ENCODE measurements at regions of chr19 and their contacts with region 1.

Region 1: GRCh38 chr19:15555759-15556633 is 47.7 kb downstream of the CYP4F22 start:
- DNase-seq: peak; percentile 95
- ATAC-seq: peak; percentile 83
- H3K4me3 ChIP-seq: peak overlapping the region; percentile 63
- H3K27ac ChIP-seq: no peak overlapping the region
- H3K4me1 ChIP-seq: 0 out of 2 replicates have a peak, but pooled peaks cover 8% of the 10 kb centered on the region
- H3K27me3 ChIP-seq: no peaks in the 10 kb centered on the region
- CTCF ChIP-seq: peak; percentile 74

Region 2: GRCh38 chr19:15101479-15102082 is 454.4 kb before region 1 on chr19:
- CTCF ChIA-PET with region 1: no interaction called
- POLR2A ChIA-PET with region 1: no interaction called
- intact Hi-C with region 1: loop called (anchors 2 kb)
- DNase-seq: peak; percentile 62
- ATAC-seq: peak; percentile 48; the same call in 1 of the 2 replicates
- H3K4me3 ChIP-seq: no peak overlapping the region
- H3K27ac ChIP-seq: no peak overlapping the region
- H3K4me1 ChIP-seq: no peaks in the 10 kb centered on the region
- H3K27me3 ChIP-seq: no peaks in the 10 kb centered on the region
- CTCF ChIP-seq: peak; percentile 80

Region 3: GRCh38 chr19:15177269-15178116 is 378.5 kb before region 1 on chr19:
- CTCF ChIA-PET with region 1: no interaction called
- POLR2A ChIA-PET with region 1: no interaction called
- intact Hi-C with region 1: loop called (anchors 1 kb)
- DNase-seq: peak; percentile 86
- ATAC-seq: peak; percentile 87
- H3K4me3 ChIP-seq: peak overlapping the region; percentile 49; the same call in 1 of the 2 replicates
- H3K27ac ChIP-seq: no peak overlapping the region
- H3K4me1 ChIP-seq: no peaks in the 10 kb centered on the region; the same call in 1 of the 2 replicates
- H3K27me3 ChIP-seq: no peaks in the 10 kb centered on the region
- CTCF ChIP-seq: peak; percentile 84

Region 4: GRCh38 chr19:15418588-15419412 is 137.2 kb before region 1 on chr19 and contains the start of gene AKAP8L:
- CTCF ChIA-PET with region 1: interaction called, 15 read pairs
- POLR2A ChIA-PET with region 1: no interaction called
- intact Hi-C with region 1: loop called (anchors 1 kb)
- DNase-seq: peak; percentile 99
- ATAC-seq: peak; percentile 92
- H3K4me3 ChIP-seq: peak within 1 kb of the TSS; percentile 97
- H3K27ac ChIP-seq: peak within 1 kb of the TSS; percentile 45
- H3K4me1 ChIP-seq: peaks cover 23% of the 10 kb centered on the region
- H3K27me3 ChIP-seq: no peaks in the 10 kb centered on the region
- CTCF ChIP-seq: peak; percentile 64
- total RNA-seq, gene AKAP8L: 97.9 and 137 TPM in 2 replicates

Region 5: DNA sequence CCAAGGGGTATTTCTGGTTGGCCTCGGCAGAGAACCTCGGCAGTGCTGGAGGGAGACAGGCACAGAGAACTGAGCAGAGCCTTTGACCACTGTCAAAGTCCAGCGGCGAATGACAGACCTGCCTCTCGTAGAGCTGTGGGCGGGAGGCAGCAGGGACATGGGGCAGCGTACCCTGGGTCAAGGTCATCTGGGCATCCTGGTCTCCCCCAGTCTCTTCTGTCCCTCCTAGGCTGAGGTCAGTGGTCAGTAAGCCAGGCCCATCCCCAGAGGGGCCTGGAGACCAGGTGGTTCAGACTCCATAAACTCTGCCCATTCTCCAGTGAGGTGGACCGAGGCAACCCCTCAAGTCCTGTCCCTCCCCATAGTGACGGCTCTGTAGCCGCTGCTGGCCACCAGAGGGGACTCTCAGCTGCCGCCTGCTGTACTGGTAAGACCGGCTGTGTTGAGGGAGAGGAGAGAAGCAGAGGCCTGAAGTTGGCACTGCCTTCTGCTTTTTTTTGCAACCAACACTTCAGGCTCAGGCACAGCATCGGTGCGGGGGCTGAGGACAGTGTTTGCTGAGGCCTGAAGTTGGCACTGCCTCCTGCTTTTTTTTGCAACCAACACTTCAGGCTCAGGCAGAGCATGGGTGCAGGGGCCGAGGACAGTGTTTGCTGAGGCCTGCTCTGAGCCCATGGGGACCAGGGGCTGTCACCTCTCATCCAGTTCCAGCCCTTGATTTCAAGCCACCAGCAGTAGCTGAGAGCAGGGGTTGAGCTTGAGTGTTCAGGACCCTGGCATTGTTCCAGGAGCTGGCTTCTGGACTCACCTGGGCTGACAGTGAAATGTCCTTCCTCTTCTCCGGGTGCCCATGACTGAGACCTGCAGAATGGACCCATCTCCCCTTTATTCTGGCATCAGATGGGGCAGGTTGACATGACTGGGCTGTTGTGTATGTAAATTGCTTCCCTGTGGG is 76.3 kb before region 1 on chr19 and contains the start of gene PGLYRP2:
- CTCF ChIA-PET with region 1: no interaction called
- POLR2A ChIA-PET with region 1: no interaction called
- intact Hi-C with region 1: loop called (anchors 1 kb)
- DNase-seq: peak; percentile 48
- ATAC-seq: peak; percentile 78
- H3K4me3 ChIP-seq: no peak within 1 kb of the TSS
- H3K27ac ChIP-seq: no peak within 1 kb of the TSS
- H3K4me1 ChIP-seq: no peaks in the 10 kb centered on the region
- H3K27me3 ChIP-seq: no peaks in the 10 kb centered on the region
- CTCF ChIP-seq: peak; percentile 55; the same call in 1 of the 2 replicates
- total RNA-seq, gene PGLYRP2: not detected in 2 replicates

Region 6: DNA sequence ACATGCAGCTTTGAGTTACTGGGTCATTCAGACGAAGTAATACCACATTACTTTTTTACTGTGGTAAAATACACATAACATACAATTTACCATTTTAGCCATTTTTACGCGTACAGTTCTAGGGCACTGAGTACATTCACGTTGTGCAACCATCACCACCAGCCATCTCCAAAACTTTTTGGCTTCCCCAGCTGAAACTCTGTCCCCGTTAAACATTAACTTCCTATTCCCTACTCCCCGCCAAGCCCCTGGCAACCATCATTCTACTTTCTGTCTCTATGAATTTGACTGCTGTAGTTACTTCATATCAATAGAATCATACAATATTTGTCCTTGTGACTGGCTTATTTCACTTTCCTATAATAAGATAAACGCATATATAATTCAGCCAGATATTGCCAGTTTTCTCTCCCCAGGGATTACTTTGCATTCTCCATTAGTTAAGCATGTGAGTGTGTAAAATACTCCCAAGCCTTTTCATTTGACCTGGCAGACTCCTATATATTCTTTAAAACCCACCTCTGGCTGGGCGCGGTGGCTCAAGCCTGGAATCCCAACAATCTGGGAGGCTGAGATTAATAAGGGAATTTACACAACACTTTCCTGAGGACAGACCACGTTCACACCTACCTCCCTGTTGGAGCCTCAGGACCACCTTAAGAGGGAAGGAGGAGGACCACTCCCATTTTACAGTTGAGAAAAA is 57.7 kb before region 1 on chr19:
- CTCF ChIA-PET with region 1: no interaction called
- POLR2A ChIA-PET with region 1: no interaction called
- intact Hi-C with region 1: no loop called
- DNase-seq: no peak
- ATAC-seq: no peak
- H3K4me3 ChIP-seq: no peak overlapping the region
- H3K27ac ChIP-seq: no peak overlapping the region
- H3K4me1 ChIP-seq: no peaks in the 10 kb centered on the region
- H3K27me3 ChIP-seq: no peaks in the 10 kb centered on the region
- CTCF ChIP-seq: no peak

Region 7: DNA sequence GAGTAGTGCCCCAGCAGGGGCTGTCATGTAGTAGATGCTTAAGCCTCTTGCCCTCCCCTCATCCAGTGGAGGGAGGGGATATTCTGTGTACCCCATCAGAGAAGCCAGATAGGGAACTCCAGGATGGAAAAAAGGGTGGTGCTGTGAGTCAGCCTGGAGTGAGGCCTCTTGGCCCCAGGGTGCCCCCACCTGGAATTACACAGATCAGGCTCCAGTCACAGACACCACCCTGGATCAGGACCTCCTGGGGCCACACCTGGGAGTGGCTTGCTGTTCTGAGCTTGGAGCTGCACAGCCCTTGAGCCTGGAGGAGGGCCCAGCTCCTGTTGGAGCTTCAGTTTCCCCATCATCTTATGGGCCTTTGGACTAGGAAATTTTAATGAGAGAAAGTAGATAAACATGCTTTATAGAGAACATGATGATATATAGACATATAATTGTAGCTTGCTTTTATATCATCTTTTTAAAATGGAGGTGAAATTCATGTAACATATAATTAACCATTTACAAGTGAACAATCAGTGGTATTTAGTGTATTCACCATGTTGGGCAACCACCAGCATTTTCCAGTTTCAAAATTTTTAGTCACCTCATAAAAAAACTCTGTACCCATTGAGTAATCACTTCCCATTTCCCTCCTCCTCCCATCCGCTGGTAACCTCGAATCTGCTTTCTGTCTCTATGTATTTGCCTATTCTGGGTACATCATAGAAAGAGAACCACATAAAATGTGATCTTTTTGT is 23.0 kb before region 1 on chr19:
- CTCF ChIA-PET with region 1: no interaction called
- POLR2A ChIA-PET with region 1: no interaction called
- intact Hi-C with region 1: no loop called
- DNase-seq: peak; percentile 45
- ATAC-seq: no peak; the same call in 1 of the 2 replicates
- H3K4me3 ChIP-seq: no peak overlapping the region
- H3K27ac ChIP-seq: no peak overlapping the region
- H3K4me1 ChIP-seq: peaks cover 6% of the 10 kb centered on the region; the same call in 1 of the 2 replicates
- H3K27me3 ChIP-seq: peaks cover 3% of the 10 kb centered on the region; the same call in 1 of the 2 replicates
- CTCF ChIP-seq: no peak

Region 8: GRCh38 chr19:15570420-15570819 is 14.4 kb after region 1 on chr19:
- CTCF ChIA-PET with region 1: no interaction called
- POLR2A ChIA-PET with region 1: no interaction called
- intact Hi-C with region 1: no loop called
- DNase-seq: no peak
- ATAC-seq: no peak
- H3K4me3 ChIP-seq: no peak overlapping the region
- H3K27ac ChIP-seq: no peak overlapping the region
- H3K4me1 ChIP-seq: no peaks in the 10 kb centered on the region
- H3K27me3 ChIP-seq: peaks cover 37% of the 10 kb centered on the region
- CTCF ChIP-seq: no peak

Region 9: DNA sequence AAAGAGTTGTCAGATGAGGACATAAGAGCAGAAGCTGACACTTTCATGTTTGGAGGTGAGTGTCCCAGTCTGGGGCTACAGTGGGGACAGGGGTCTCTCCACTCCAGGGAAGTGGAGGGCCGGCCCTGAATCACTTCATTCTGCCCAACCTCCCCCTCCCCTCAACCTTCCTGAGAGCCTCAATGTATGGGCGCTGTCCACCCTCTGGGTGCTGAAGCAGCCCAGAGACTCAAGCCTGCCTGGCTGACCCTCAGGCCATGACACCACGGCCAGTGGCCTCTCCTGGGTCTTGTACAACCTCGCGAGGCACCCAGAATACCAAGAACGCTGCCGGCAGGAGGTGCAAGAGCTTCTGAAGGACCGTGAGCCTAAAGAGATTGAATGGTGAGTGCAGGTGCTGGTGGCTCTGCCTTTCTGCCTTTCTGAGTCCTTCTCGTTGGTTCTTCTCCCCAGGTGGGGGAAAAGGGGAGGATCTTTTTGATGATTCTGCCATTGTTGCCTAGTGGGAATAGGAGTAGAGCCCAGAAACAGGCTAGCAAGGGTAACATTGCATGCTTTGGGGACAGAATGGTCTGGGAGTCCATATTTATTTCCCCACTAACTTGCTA is 67.8 kb after region 1 on chr19:
- CTCF ChIA-PET with region 1: no interaction called
- POLR2A ChIA-PET with region 1: no interaction called
- intact Hi-C with region 1: no loop called
- DNase-seq: peak; percentile 37
- ATAC-seq: no peak
- H3K4me3 ChIP-seq: no peak overlapping the region
- H3K27ac ChIP-seq: no peak overlapping the region
- H3K4me1 ChIP-seq: no peaks in the 10 kb centered on the region
- H3K27me3 ChIP-seq: no peaks in the 10 kb centered on the region
- CTCF ChIP-seq: no peak